Naive thymus-derived CD4-positive, alpha-beta T cell (primary cell): ENCODE measurements at regions of chr22 and their contacts with region 1.

Region 1: DNA sequence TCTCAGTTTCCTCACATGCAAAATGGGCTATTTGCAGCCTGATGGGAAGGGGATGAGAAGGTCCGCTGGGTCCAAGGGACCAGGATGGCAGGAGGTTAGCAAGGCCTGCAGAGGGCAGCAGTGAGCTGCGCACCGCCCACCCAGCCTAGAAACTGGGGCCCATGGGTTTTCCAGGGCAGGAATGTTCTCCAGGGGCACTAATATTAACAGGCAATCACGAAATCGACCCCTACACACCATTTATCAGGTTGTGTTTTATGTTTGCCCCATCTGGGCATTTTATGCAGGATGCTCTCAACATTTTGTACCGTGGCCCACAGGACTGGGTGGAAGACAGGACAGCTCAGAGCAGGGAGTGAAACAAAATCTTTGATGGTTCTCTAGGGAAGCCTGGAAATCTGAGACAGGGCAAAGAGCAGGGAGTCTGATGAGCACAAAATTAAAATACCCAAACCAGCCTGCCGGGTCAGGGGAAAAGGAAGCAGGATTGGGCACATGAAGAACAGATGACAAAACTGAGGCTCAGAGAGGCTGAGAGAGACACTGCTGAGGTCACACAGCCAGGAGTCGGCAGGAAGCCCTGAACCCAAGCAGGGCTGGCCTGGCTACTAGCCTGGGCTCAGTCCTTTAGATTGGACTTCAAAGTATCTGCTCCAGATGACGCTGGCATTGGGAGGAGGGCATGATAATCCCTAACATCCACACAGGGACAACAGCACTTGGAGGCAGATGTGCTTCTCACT is 1.6 kb upstream of the BCR start:
- DNase-seq: peak in 8 of 9 donors; percentile 38 to 76 (median 62)
- ATAC-seq: peak; percentile 54
- H3K4me3 ChIP-seq: no peak overlapping the region
- H3K4me3 Mint-ChIP-seq: peak overlapping the region; percentile 70 to 90 (median 80)
- H3K27ac ChIP-seq: no peak overlapping the region
- H3K27ac Mint-ChIP-seq: peak overlapping the region; percentile 56 to 95 (median 82)
- H3K4me1 ChIP-seq: peaks cover 22 to 39% of the 10 kb centered on the region in 2 donors
- H3K4me1 Mint-ChIP-seq: peaks cover 43 to 57% (median 51%) of the 10 kb centered on the region in 7 donors
- H3K27me3 ChIP-seq: no peaks in the 10 kb centered on the region
- H3K27me3 Mint-ChIP-seq: peaks cover 0 to 2% (median 0%) of the 10 kb centered on the region in 5 donors

Region 2: GRCh38 chr22:23219822-23220484 is 41.3 kb after region 1 on chr22:
- CTCF ChIA-PET with region 1: interaction called, 3 read pairs
- POLR2A ChIA-PET with region 1: interaction called, 7 read pairs
- intact Hi-C with region 1: loop called (anchors 2 kb)
- DNase-seq: peak in 2 of 9 donors; percentile 35 to 62
- ATAC-seq: peak; percentile 72
- H3K4me3 ChIP-seq: peak overlapping the region; percentile 29
- H3K4me3 Mint-ChIP-seq: peak overlapping the region; percentile 78 to 94 (median 88)
- H3K27ac ChIP-seq: peak overlapping the region; percentile 70
- H3K27ac Mint-ChIP-seq: peak overlapping the region; percentile 80 to 99 (median 86)
- H3K4me1 ChIP-seq: peaks cover 21 to 96% of the 10 kb centered on the region in 2 donors
- H3K4me1 Mint-ChIP-seq: peaks cover 79 to 100% (median 97%) of the 10 kb centered on the region in 7 donors
- H3K27me3 ChIP-seq: no peaks in the 10 kb centered on the region
- H3K27me3 Mint-ChIP-seq: no peaks in the 10 kb centered on the region

Region 3: GRCh38 chr22:23240639-23241389 is 62.1 kb after region 1 on chr22:
- CTCF ChIA-PET with region 1: interaction called, 5 read pairs
- POLR2A ChIA-PET with region 1: interaction called, 15 read pairs
- intact Hi-C with region 1: loop called (anchors 1 kb)
- DNase-seq: peak in 1 of 9 donors; percentile 46
- ATAC-seq: peak; percentile 10
- H3K4me3 ChIP-seq: no peak overlapping the region
- H3K4me3 Mint-ChIP-seq: peak overlapping the region in 9 of 10 donors; percentile 29 to 84 (median 32)
- H3K27ac ChIP-seq: peak overlapping the region; percentile 84
- H3K27ac Mint-ChIP-seq: peak overlapping the region; percentile 74 to 96 (median 88)
- H3K4me1 ChIP-seq: peaks cover 51 to 76% of the 10 kb centered on the region in 2 donors
- H3K4me1 Mint-ChIP-seq: peaks cover 60 to 98% (median 87%) of the 10 kb centered on the region in 7 donors
- H3K27me3 ChIP-seq: no peaks in the 10 kb centered on the region
- H3K27me3 Mint-ChIP-seq: no peaks in the 10 kb centered on the region

Region 4: DNA sequence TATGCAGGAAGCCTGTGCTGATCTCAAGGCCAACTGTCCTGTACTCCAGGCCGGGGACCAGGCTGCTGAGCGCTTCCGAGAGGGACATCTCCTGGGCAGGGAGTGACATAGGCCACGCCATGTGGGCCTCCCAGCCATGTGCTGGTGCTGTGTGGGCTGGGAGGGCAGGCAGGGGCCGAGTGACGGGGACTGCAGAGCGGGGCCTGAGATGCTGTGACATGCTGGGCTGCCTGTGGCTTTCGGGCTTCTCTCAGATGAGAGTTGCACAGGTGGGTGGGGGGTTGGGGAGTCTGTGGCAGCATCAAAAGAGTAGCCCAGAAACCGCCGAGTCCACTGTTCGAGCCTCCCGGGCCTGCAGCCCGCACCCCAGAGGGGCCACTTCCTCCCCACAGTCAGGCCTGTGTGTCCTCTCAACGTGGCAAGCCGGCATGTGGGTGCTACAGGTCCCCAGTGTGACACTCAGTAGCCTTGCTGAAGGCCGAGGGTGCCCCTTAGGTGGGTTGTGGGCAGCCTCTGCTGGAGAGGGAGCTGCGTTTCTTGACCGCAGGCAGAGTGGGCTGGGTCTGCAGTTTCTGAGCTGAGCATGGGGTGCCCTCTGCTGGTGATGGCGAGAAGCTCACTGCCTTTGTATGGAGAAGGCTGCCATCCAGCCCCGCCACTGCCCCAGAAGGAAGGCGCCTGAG is 102.9 kb after region 1 on chr22:
- CTCF ChIA-PET with region 1: interaction called, 69 read pairs
- POLR2A ChIA-PET with region 1: interaction called, 9 read pairs
- intact Hi-C with region 1: loop called (anchors 1 kb)
- DNase-seq: peak; percentile 57 to 80 (median 73)
- ATAC-seq: peak; percentile 86
- H3K4me3 ChIP-seq: no peak overlapping the region
- H3K4me3 Mint-ChIP-seq: no peak overlapping the region
- H3K27ac ChIP-seq: no peak overlapping the region
- H3K27ac Mint-ChIP-seq: no peak overlapping the region
- H3K4me1 ChIP-seq: peaks cover 7 to 27% of the 10 kb centered on the region in 2 donors
- H3K4me1 Mint-ChIP-seq: peaks cover 0 to 29% (median 9%) of the 10 kb centered on the region in 7 donors
- H3K27me3 ChIP-seq: no peaks in the 10 kb centered on the region
- H3K27me3 Mint-ChIP-seq: no peaks in the 10 kb centered on the region

Region 5: GRCh38 chr22:23385291-23386244 is 206.9 kb after region 1 on chr22:
- CTCF ChIA-PET with region 1: interaction called, 6 read pairs
- POLR2A ChIA-PET with region 1: no interaction called
- intact Hi-C with region 1: loop called (anchors 1 kb)
- DNase-seq: peak; percentile 48 to 84 (median 71)
- ATAC-seq: peak; percentile 84
- H3K4me3 ChIP-seq: no peak overlapping the region
- H3K4me3 Mint-ChIP-seq: no peak overlapping the region
- H3K27ac ChIP-seq: no peak overlapping the region
- H3K27ac Mint-ChIP-seq: no peak overlapping the region
- H3K4me1 ChIP-seq: no peaks in the 10 kb centered on the region
- H3K4me1 Mint-ChIP-seq: no peaks in the 10 kb centered on the region
- H3K27me3 ChIP-seq: no peaks in the 10 kb centered on the region
- H3K27me3 Mint-ChIP-seq: no peaks in the 10 kb centered on the region

Region 6: GRCh38 chr22:23539135-23539838 is 360.6 kb after region 1 on chr22:
- CTCF ChIA-PET with region 1: no interaction called
- POLR2A ChIA-PET with region 1: no interaction called
- intact Hi-C with region 1: loop called in 1 of 2 experiments (anchors 1 kb)
- DNase-seq: peak; percentile 41 to 73 (median 65)
- ATAC-seq: peak; percentile 100
- H3K4me3 ChIP-seq: no peak overlapping the region
- H3K4me3 Mint-ChIP-seq: peak overlapping the region in 6 of 10 donors; percentile 26 to 62 (median 46)
- H3K27ac ChIP-seq: no peak overlapping the region
- H3K27ac Mint-ChIP-seq: no peak overlapping the region
- H3K4me1 ChIP-seq: peaks cover 3 to 5% of the 10 kb centered on the region in 2 donors
- H3K4me1 Mint-ChIP-seq: peaks cover 0 to 11% (median 10%) of the 10 kb centered on the region in 7 donors
- H3K27me3 ChIP-seq: no peaks in the 10 kb centered on the region
- H3K27me3 Mint-ChIP-seq: peaks cover 0 to 26% (median 0%) of the 10 kb centered on the region in 5 donors